Astrocyte of the cerebellum (primary cell): ENCODE measurements at regions of chr12 and their contacts with region 1.

Region 1: GRCh38 chr12:23424685-23425084 is 524.8 kb downstream of the SOX5 start:
- DNase-seq: no peak
- H3K4me3 ChIP-seq: no peak overlapping the region
- CTCF ChIP-seq: no peak

Region 2: DNA sequence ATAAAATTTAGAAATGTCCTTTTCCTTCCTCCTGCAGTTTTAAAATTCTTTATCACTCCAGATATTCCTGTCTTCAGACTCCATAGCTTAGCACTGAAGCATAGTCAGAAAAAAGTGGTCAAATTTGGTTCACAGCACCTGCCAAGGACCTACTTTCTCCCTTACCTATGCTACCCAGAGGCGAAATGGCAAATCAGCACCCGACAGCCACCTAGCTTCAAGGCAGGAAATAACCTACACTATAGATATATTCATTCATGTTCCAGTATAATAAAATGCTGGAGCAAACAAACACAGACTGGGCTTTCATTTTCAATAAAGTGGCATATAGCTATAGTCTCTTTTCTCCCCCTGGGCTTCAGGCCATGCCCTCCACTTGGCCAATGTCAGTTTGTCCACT is 84.9 kb before region 1 on chr12:
- in situ Hi-C with region 1: loop called (anchors 5 kb)
- DNase-seq: no peak
- H3K4me3 ChIP-seq: no peak overlapping the region
- CTCF ChIP-seq: no peak